Ovary (tissue), 10 donors: ENCODE measurements at regions of chr5 and their contacts with region 1.

Region 1: GRCh38 chr5:41270423-41271251 is 57.3 kb upstream of the C6 start:
- DNase-seq: peak; percentile 46 to 76 (median 50)
- H3K4me3 ChIP-seq: no peak overlapping the region
- H3K27ac ChIP-seq: no peak overlapping the region
- H3K4me1 ChIP-seq: peaks cover 2% of the 10 kb centered on the region
- H3K27me3 ChIP-seq: no peaks in the 10 kb centered on the region
- CTCF ChIP-seq: peak; percentile 36 to 88 (median 72)
- EP300 ChIP-seq: no peak
- POLR2A ChIP-seq: no peak

Region 2: DNA sequence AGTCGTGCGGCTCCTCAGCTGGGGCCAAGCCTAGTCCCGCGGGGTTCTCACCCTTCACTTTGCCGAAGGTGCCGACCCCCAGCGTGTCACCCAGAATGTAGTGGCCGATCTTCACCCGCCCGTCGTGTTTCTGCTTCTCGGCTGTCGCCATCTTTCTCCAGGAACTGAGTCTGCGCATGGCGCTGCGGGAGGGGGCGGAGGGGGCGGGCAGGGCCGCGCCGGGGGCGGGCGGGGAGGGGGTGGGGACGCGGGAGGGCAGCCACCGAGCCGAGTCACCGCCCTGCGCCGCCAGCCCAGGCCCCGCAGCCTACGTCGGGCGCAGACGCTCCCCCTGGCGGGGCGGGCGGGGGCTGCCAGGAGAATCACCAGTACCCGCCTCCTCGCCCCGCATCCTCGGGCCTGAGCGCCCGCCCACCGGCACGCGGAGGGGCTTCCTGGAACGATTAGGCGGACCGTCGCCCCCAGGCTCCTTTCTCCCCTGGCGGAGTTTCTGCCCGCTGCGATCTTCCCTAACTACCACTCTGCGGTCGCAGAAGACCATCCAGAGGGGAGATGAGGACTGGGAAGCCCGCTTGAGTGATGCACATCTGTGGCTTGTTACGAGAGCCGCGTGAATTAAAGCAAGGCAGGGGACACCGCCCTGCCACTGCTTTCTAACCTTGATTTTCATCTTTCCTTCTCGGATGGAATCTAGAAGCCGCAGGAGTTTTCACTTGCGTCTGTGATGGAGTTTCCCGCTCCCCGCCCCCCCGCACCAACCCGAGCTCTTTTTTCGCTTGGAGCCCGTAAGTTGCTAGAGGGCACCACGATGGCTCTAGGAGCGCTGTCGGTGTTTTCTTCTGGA is 472.4 kb before region 1 on chr5 and contains the start of gene PRKAA1:
- intact Hi-C with region 1: no loop called
- DNase-seq: peak; percentile 85 to 94 (median 91)
- H3K4me3 ChIP-seq: peak within 1 kb of the TSS; percentile 95
- H3K27ac ChIP-seq: peak within 1 kb of the TSS; percentile 93 to 96
- H3K4me1 ChIP-seq: peaks cover 4% of the 10 kb centered on the region
- H3K27me3 ChIP-seq: no peaks in the 10 kb centered on the region
- CTCF ChIP-seq: peak; percentile 64 to 68 (median 67)
- EP300 ChIP-seq: peak; percentile 52
- POLR2A ChIP-seq: peak; percentile 61
- total RNA-seq, gene PRKAA1: 50.3 to 77.1 (median 60.0) TPM

Region 3: DNA sequence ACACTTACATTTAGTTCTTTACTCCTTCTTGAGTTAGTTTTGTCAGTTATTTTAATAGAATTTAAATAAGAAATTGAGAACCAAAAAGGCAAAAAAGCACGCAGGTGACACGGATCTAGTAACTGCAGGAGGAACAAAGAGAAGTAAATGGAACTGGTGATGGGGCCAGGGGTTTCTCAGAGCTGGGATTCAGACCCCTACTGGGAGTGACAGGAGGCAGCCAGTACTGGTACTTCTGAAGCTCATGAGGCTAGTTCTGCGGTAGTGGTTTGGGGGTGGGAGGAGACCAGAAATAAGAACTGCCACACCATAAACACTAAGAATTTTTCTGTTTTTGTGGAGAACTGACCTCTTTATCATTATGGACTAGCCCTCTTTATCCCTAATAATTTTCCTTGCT is 551.4 kb after region 1 on chr5:
- intact Hi-C with region 1: loop called in 1 of 4 experiments (anchors 10 kb)
- DNase-seq: no peak
- H3K4me3 ChIP-seq: no peak overlapping the region
- H3K27ac ChIP-seq: no peak overlapping the region
- H3K4me1 ChIP-seq: peaks cover 1% of the 10 kb centered on the region
- H3K27me3 ChIP-seq: no peaks in the 10 kb centered on the region
- CTCF ChIP-seq: no peak
- EP300 ChIP-seq: no peak
- POLR2A ChIP-seq: no peak